ENCODE measurements at regions of chr3 and their contacts with region 1.

Region 1: DNA sequence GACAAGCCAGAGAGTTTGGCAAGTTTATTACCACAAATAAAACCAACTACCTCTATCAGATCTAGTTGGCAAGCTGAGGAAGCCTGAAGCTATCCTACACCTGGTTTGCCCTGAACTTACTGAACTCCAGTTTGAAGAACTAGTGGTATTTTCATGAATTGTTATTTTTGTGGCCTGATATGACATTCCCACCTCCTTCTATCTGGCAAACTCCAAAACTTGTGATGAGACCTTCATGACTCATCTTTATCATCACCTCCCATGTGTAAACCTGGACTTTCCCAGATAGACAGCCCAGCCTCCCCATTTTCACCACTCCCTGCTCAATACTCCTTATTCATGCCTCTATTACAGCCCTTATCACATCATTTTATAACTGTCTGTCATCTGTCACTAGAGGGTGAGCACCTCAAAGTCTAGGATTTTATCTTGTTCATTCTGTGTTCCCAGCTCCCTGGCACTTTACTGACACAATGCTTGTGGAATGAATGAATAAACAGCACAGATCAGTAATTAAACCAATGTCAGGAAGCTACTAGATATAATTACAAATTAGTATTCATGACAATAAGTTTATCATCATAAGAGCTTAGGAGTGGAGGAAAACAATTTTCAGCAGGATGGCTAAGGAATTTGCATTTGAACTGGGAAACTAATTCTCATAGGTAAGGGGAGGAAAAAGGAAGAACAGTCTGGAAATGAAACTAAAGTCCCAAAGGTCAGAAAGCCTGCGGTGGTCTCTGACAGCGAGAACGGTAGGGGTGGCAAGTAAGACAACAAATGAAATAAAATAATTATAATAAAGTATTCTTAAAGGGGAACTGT is 13.2 kb upstream of the TRANK1 start:
- DNase-seq: no peak
- ATAC-seq: peak; percentile 21
- H3K4me3 Mint-ChIP-seq: no peak overlapping the region
- H3K27ac Mint-ChIP-seq: no peak overlapping the region
- H3K4me1 Mint-ChIP-seq: peaks cover 16% of the 10 kb centered on the region
- H3K27me3 Mint-ChIP-seq: no peaks in the 10 kb centered on the region

Region 2: DNA sequence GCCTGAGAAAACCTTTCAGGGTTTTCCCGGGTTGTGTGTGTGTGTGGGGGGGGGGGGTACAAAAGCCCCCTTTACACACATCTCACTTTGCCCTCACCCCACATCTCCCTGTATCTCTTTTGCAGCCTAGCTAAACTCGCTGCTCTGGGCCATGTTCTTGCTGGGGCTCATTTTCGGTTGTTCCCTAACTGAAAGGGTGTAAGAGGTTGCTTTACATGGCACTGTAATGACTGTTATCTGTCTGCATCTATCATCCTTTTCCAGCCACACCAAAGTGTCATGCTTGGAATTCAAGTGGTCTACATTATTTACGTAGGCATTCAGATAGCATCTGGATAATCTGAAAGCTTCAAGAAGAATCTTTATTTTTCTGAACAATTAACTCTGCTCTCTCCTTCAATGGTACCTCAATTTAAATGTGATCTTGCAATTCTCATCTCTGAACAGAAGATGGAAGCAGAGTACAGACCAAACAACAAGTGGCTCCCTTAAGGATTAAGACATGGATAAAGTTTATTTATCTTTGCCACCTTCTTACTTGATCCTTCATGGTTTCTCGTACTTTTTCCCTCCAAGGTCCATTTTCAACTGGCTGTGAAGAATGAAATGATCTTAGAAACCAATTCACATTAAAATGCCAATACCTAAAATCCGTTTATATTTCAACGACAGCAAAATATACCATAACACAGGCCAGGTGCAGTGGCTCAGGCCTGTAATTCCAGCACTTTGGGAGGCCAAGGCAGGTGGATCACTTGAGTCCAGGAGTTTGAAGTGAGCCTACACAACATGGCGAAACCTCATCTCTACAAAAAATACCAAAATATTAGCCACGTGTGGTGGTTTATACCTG is 228.6 kb before region 1 on chr3:
- CTCF ChIA-PET with region 1: interaction called, 26 read pairs
- POLR2A ChIA-PET with region 1: no interaction called
- intact Hi-C with region 1: loop called (anchors 1 kb)
- DNase-seq: no peak
- ATAC-seq: no peak
- H3K4me3 Mint-ChIP-seq: no peak overlapping the region
- H3K27ac Mint-ChIP-seq: no peak overlapping the region
- H3K4me1 Mint-ChIP-seq: no peaks in the 10 kb centered on the region
- H3K27me3 Mint-ChIP-seq: no peaks in the 10 kb centered on the region

Region 3: DNA sequence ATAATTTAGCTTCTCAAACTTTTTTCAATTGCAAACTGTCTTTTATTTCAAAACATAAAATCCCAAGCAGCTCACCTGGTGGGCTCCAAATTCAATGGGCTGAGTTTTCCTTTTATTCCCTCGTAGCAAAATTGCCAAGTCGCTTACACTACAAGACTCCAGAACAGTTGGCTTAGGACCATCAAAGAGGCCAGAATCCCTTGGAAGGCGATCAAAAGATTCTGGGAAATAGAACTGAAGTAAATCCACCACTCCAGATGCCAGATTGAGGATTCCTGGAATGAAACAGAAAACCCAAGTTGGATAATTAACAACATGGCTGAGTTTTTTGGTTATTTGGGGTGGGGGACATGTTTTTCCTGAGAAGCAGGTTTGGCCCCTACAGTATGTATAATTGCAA is 106.0 kb before region 1 on chr3:
- CTCF ChIA-PET with region 1: interaction called, 14 read pairs
- POLR2A ChIA-PET with region 1: no interaction called
- intact Hi-C with region 1: no loop called
- DNase-seq: no peak
- ATAC-seq: no peak
- H3K4me3 Mint-ChIP-seq: no peak overlapping the region
- H3K27ac Mint-ChIP-seq: no peak overlapping the region
- H3K4me1 Mint-ChIP-seq: no peaks in the 10 kb centered on the region
- H3K27me3 Mint-ChIP-seq: no peaks in the 10 kb centered on the region

Region 4: DNA sequence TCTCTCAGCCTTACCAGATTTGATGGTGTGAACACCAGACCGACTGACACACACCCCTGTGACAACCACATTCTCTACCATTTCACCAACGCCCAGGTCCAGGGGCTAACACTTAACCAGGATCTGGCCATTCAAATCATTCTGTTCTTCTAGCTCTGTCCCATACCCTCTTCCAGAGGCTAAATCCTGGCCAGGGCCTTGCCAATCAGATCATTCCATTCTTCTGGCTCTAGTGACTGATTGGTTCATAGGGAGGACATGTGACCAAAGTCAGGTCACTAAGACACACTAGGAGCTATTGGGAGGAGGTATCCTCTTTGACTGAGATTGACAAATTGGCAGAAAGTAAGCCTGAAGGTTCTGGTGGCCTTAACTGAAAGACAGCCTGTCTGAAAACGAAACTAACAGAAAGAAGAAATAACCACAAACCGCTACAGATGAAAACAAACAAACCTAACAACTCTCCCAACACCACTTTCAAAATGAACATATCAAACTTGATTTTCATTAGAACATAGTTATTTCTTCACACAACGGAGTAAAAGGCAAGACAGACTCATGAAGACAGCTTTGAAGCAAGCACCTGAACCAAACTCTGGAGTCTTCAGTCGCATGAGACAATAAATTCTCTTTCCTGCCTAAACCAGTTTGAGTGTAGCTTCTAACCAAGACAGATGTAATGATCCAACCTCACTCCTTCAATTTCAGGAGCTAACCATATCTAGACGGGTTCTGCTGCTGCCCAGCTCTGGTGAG is 81.7 kb before region 1 on chr3:
- CTCF ChIA-PET with region 1: interaction called, 11 read pairs
- POLR2A ChIA-PET with region 1: interaction called, 4 read pairs
- intact Hi-C with region 1: loop called in 1 of 2 experiments (anchors 2 kb)
- DNase-seq: no peak
- ATAC-seq: peak; percentile 94
- H3K4me3 Mint-ChIP-seq: peak overlapping the region; percentile 44
- H3K27ac Mint-ChIP-seq: peak overlapping the region; percentile 69
- H3K4me1 Mint-ChIP-seq: peaks cover 37% of the 10 kb centered on the region
- H3K27me3 Mint-ChIP-seq: peaks cover 2% of the 10 kb centered on the region

Region 5: GRCh38 chr3:36911990-36912804 is 45.9 kb before region 1 on chr3:
- CTCF ChIA-PET with region 1: interaction called, 33 read pairs
- POLR2A ChIA-PET with region 1: no interaction called
- intact Hi-C with region 1: loop called in 1 of 2 experiments (anchors 1 kb)
- DNase-seq: peak; percentile 57
- ATAC-seq: peak; percentile 87
- H3K4me3 Mint-ChIP-seq: peak overlapping the region; percentile 61
- H3K27ac Mint-ChIP-seq: peak overlapping the region; percentile 85
- H3K4me1 Mint-ChIP-seq: peaks cover 44% of the 10 kb centered on the region
- H3K27me3 Mint-ChIP-seq: peaks cover 2% of the 10 kb centered on the region

Region 6: DNA sequence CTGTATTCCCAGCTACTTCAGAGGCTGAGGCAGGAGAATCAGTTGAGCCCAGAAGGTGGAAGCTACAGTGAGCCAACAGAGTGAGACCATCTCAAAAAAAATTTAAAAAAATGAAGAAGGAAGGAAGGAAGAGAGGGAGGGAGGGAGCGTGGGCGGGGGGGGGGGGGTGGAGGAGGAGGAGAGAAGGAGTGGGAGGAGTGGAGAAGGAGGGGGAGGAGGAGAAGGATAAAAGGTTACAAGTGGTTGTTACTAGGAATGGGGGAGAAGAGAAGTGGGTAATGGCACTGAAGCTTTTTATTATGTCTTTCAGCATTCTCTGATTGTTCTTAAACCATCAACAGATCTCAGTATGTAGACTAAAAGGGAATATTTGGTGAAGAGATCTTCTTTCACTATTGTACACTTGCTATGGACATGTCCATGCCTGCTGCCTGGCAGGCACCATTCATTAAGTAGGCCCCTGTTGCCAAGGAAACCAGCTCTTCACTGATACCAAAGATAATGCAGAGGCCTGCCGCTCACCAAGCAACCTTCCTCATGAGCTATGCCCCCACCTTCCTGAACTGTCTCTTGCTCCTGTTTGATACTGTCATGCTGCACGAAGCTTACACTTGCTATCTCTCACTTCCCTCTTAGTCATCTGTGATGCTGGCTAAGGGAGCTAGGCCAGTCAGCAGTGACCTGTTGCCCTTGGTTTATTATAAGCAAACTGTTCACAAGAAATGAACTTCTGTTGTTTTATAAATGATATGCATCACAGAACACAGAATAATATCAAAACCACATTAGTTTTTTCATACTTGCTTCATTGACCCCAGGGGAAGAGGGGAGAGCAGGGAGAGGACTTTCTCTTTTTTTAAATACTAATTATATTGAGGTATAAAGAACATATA is 11.7 kb after region 1 on chr3:
- CTCF ChIA-PET with region 1: interaction called, 28 read pairs
- POLR2A ChIA-PET with region 1: no interaction called
- intact Hi-C with region 1: no loop called
- DNase-seq: peak; percentile 62
- ATAC-seq: peak; percentile 100
- H3K4me3 Mint-ChIP-seq: no peak overlapping the region
- H3K27ac Mint-ChIP-seq: peak overlapping the region; percentile 18
- H3K4me1 Mint-ChIP-seq: peaks cover 18% of the 10 kb centered on the region
- H3K27me3 Mint-ChIP-seq: no peaks in the 10 kb centered on the region

Measured in activated CD4-positive, alpha-beta T cell treated with anti-CD3 and anti-CD28 coated beads for 36 hours (primary cell).